Sciatic nerve (tissue), 2 donors: ENCODE measurements at regions of chr6 and their contacts with region 1.

Region 1: DNA sequence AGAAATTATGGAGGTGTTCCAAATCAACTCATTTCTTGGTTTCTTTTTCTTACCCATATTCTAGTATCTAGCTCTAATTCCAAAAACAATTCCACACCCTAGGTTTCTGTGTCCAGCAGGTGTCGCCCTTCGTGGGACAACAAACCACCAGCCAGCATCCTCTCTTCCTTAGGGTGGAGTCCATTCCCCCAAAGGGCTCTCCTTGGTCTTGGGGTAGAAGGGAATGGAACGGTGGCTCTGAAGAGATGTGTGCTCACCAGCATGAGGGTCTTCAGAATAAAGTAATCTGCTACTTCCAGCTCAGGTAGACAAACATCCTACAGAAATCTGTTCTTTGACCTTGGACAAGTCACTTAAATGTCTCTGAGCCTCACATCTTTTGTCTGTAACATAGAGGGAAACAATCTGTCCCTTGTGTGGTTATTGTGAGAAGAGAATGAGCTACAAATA is 7.2 kb downstream of the HLA-DMB start:
- DNase-seq: peak; percentile 91
- ATAC-seq: peak; percentile 61

Region 2: GRCh38 chr6:32885698-32886286 is 47.9 kb before region 1 on chr6:
- intact Hi-C with region 1: loop called (anchors 10 kb)
- DNase-seq: no peak
- ATAC-seq: peak; percentile 70

Region 3: GRCh38 chr6:32984605-32985389 is 51.1 kb after region 1 on chr6:
- intact Hi-C with region 1: loop called (anchors 10 kb)
- DNase-seq: peak; percentile 95
- ATAC-seq: peak; percentile 85